Heart right ventricle (tissue), 16 donors: ENCODE measurements at regions of chr21 and their contacts with region 1.

Region 1: DNA sequence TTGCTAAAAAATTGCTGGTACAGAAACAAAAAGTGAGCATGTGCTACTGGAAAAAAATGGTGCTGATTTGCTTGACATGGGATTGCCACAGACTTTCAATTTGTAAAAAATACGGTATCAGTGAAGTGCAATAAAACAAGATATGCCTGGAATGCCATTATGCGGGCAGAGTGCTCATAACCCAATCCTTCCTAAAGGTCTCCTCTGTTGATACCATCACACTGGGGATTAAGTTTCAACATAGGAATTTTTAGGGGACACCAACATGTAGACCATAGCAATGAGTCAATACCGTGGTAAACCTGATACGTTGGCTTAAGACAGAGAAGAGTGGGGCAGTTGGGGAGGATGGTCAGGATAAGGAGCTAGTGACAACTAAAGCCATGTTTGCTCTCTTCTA is 20.5 kb downstream of the MX1 start:
- DNase-seq: no peak
- ATAC-seq: no peak
- H3K4me3 ChIP-seq: no peak overlapping the region
- H3K27ac ChIP-seq: no peak overlapping the region
- H3K4me1 ChIP-seq: no peaks in the 10 kb centered on the region
- H3K27me3 ChIP-seq: no peaks in the 10 kb centered on the region
- CTCF ChIP-seq: no peak

Region 2: GRCh38 chr21:41289426-41289825 is 157.1 kb before region 1 on chr21:
- intact Hi-C with region 1: loop called in 1 of 10 experiments (anchors 5 kb)
- DNase-seq: no peak
- ATAC-seq: no peak
- H3K4me3 ChIP-seq: no peak overlapping the region
- H3K27ac ChIP-seq: no peak overlapping the region
- H3K4me1 ChIP-seq: no peaks in the 10 kb centered on the region
- H3K27me3 ChIP-seq: peaks cover 0 to 52% (median 39%) of the 10 kb centered on the region in 7 donors
- CTCF ChIP-seq: no peak

Region 3: GRCh38 chr21:41425954-41426675 is 20.5 kb before region 1 on chr21 and contains the start of gene MX1:
- intact Hi-C with region 1: no loop called
- DNase-seq: peak; percentile 77 to 81
- ATAC-seq: peak; percentile 84 to 96 (median 94)
- H3K4me3 ChIP-seq: peak within 1 kb of the TSS; percentile 33 to 86 (median 74)
- H3K27ac ChIP-seq: peak within 1 kb of the TSS; percentile 25 to 95 (median 86)
- H3K4me1 ChIP-seq: peaks cover 0 to 53% (median 22%) of the 10 kb centered on the region in 9 donors
- H3K27me3 ChIP-seq: peaks cover 0 to 17% (median 0%) of the 10 kb centered on the region in 7 donors
- CTCF ChIP-seq: no peak
- total RNA-seq, gene MX1: 11.1 to 50.0 (median 20.1) TPM

Region 4: GRCh38 chr21:41526478-41527087 is 80.0 kb after region 1 on chr21:
- intact Hi-C with region 1: no loop called
- DNase-seq: no peak
- ATAC-seq: no peak
- H3K4me3 ChIP-seq: no peak overlapping the region
- H3K27ac ChIP-seq: no peak overlapping the region
- H3K4me1 ChIP-seq: no peaks in the 10 kb centered on the region
- H3K27me3 ChIP-seq: peaks cover 0 to 34% (median 18%) of the 10 kb centered on the region in 7 donors
- CTCF ChIP-seq: no peak

Region 5: DNA sequence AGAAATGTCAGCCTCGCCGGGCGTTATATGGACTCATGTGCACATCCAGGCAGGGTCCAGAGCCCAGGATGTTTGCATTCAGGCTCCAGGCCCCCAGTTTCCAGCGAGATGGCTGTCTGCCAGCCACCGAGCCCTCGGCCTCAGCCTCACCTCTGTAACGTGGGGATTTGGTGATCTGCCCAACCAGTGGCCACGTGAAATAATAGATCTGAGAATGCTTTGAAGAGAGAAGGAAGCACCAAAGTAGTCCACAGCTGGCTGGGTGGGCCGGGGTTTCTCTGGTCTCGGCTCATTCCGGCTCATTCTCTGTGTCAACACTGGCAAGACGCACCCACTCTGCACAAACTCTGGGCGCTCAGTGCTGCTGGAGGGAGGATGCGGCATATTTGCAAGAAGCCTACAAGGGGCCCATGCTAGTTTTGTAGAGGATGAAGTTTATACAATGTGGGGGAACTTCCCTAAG is 90.1 kb after region 1 on chr21:
- intact Hi-C with region 1: no loop called
- DNase-seq: no peak
- ATAC-seq: no peak
- H3K4me3 ChIP-seq: no peak overlapping the region
- H3K27ac ChIP-seq: no peak overlapping the region
- H3K4me1 ChIP-seq: no peaks in the 10 kb centered on the region
- H3K27me3 ChIP-seq: peaks cover 0 to 55% (median 8%) of the 10 kb centered on the region in 7 donors
- CTCF ChIP-seq: no peak